Left ventricle myocardium superior (tissue), 1 donor: ENCODE measurements at regions of chr6 and their contacts with region 1.

Region 1: GRCh38 chr6:157019733-157020132 is 242.6 kb downstream of the ARID1B start:
- DNase-seq: no peak
- ATAC-seq: no peak

Region 2: DNA sequence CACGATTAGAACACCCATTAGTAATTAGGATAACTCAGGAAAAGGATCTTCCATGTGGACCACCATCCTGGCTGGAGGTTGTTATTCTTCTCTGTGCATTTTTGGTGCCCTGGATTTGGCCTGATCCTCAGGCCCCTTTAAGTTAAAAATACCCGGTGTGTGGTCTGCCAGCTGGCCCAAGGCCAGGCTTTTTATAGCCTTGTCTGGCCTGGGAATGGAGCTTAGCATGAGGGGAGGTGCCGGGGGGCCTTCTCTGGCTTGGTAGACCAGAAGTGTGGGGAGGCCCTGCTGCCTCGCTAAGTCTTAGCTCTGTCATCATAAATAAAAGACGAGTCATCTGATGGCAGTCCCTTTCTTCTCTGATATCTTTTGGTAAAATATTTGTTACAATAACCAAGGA is 171.2 kb before region 1 on chr6:
- intact Hi-C with region 1: loop called (anchors 10 kb)
- DNase-seq: peak; percentile 87
- ATAC-seq: peak; percentile 84

Region 3: DNA sequence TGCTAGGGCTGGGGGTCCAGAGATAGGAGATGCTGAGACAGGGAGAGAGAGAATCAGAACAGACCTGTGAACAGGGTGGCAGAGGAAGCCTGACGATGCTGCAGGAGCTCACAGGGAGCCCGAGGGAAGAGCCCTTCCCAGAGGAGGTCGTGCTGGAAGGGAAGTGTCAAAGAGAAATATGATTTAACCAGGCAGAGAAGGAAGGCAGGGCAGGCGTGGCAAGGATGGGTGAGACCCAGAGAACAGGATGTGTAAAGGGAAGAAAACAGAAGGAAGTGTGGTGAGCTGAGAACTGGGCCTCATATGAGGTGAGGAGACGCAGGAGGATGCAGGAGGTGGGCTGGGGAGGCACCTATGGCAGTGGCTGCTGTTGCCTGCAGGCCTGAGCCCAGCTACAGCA is 466.8 kb after region 1 on chr6:
- intact Hi-C with region 1: no loop called
- DNase-seq: no peak
- ATAC-seq: no peak